ENCODE measurements at regions of chr19 and their contacts with region 1.

Region 1: GRCh38 chr19:1592755-1593500 is at the start of gene MBD3:
- DNase-seq: peak; percentile 44
- ATAC-seq: peak; percentile 81
- H3K4me3 ChIP-seq: peak within 1 kb of the TSS; percentile 98
- H3K27ac ChIP-seq: peak within 1 kb of the TSS; percentile 92
- H3K4me1 ChIP-seq: peaks cover 4% of the 10 kb centered on the region; the same call in 1 of the 2 replicates
- H3K27me3 ChIP-seq: no peaks in the 10 kb centered on the region
- CTCF ChIP-seq: no peak
- EP300 ChIP-seq: no peak
- POLR2A ChIP-seq: peak; percentile 72
- RAD21 ChIP-seq: no peak
- polyA plus RNA-seq, gene MBD3: 0.13 to 1.7 TPM

Region 2: GRCh38 chr19:1605236-1606137 is 12.6 kb after region 1 on chr19 and contains the start of gene UQCR11:
- CTCF ChIA-PET with region 1: interaction called, 6 read pairs
- POLR2A ChIA-PET with region 1: interaction called, 19 read pairs
- RAD21 ChIA-PET with region 1: interaction called, 4 read pairs
- SMC1A ChIA-PET with region 1: interaction called, 11 read pairs
- in situ Hi-C with region 1: no loop called
- intact Hi-C with region 1: no loop called
- DNase-seq: peak; percentile 80
- ATAC-seq: peak; percentile 96
- H3K4me3 ChIP-seq: peak within 1 kb of the TSS; percentile 91
- H3K27ac ChIP-seq: peak within 1 kb of the TSS; percentile 83
- H3K4me1 ChIP-seq: peaks cover 9% of the 10 kb centered on the region
- H3K27me3 ChIP-seq: no peaks in the 10 kb centered on the region
- CTCF ChIP-seq: peak; percentile 70 to 87 (median 76)
- EP300 ChIP-seq: no peak
- POLR2A ChIP-seq: peak; percentile 69
- RAD21 ChIP-seq: peak; percentile 74
- polyA plus RNA-seq, gene UQCR11: 166 to 418 TPM

Measured in GM12878 (cell line).